ENCODE measurements at regions of chr19 and their contacts with region 1.

Region 1: GRCh38 chr19:11798391-11799330 is at the start of gene ZNF491:
- DNase-seq: peak; percentile 75 to 94
- H3K4me3 ChIP-seq: peak within 1 kb of the TSS; percentile 49 to 80 (median 76)
- H3K27ac ChIP-seq: no peak within 1 kb of the TSS
- H3K4me1 ChIP-seq: peaks cover 0 to 9% (median 6%) of the 10 kb centered on the region in 4 experiments; a peak in 5 of 7 replicates
- H3K27me3 ChIP-seq: peaks cover 0 to 10% (median under 1%) of the 10 kb centered on the region in 4 experiments; a peak in 2 of 7 replicates
- CTCF ChIP-seq: peak; percentile 38 to 43 (median 38)
- EP300 ChIP-seq: no peak
- POLR2A ChIP-seq: peak in 1 of 2 experiments; percentile 44; a peak in 1 of 3 replicates
- RAD21 ChIP-seq: peak in 1 of 2 experiments; percentile 38; a peak in 3 of 4 replicates
- total RNA-seq, gene ZNF491: 0.78 and 0.84 TPM in 2 replicates

Region 2: GRCh38 chr19:11814029-11814699 is 15.5 kb after region 1 on chr19 and contains the start of gene ZNF440:
- CTCF ChIA-PET with region 1: interaction called, 59 read pairs
- POLR2A ChIA-PET with region 1: interaction called, 5 read pairs
- DNase-seq: peak; percentile 79 to 97
- H3K4me3 ChIP-seq: peak within 1 kb of the TSS; percentile 54 to 82 (median 76)
- H3K27ac ChIP-seq: no peak within 1 kb of the TSS
- H3K4me1 ChIP-seq: peaks cover 0 to 5% (median 2%) of the 10 kb centered on the region in 4 experiments; a peak in 3 of 7 replicates
- H3K27me3 ChIP-seq: peaks cover 0 to 17% (median 5%) of the 10 kb centered on the region in 4 experiments; a peak in 5 of 7 replicates
- CTCF ChIP-seq: no peak
- EP300 ChIP-seq: no peak
- POLR2A ChIP-seq: peak in 1 of 2 experiments; percentile 76; a peak in 2 of 3 replicates
- RAD21 ChIP-seq: no peak
- total RNA-seq, gene ZNF440: 6.5 and 7.9 TPM in 2 replicates